MCF 10A (cell line): ENCODE measurements at regions of chr19 and their contacts with region 1.

Region 1: GRCh38 chr19:10870955-10871603 is at the start of gene CARM1:
- DNase-seq: peak; percentile 98
- H3K4me3 Mint-ChIP-seq: peak within 1 kb of the TSS; percentile 75
- H3K27ac Mint-ChIP-seq: peak within 1 kb of the TSS; percentile 75
- H3K4me1 Mint-ChIP-seq: no peaks in the 10 kb centered on the region
- H3K27me3 Mint-ChIP-seq: no peaks in the 10 kb centered on the region
- CTCF ChIP-seq: peak; percentile 52
- total RNA-seq, gene CARM1: 49.5 and 51.7 TPM in 2 replicates

Region 2: DNA sequence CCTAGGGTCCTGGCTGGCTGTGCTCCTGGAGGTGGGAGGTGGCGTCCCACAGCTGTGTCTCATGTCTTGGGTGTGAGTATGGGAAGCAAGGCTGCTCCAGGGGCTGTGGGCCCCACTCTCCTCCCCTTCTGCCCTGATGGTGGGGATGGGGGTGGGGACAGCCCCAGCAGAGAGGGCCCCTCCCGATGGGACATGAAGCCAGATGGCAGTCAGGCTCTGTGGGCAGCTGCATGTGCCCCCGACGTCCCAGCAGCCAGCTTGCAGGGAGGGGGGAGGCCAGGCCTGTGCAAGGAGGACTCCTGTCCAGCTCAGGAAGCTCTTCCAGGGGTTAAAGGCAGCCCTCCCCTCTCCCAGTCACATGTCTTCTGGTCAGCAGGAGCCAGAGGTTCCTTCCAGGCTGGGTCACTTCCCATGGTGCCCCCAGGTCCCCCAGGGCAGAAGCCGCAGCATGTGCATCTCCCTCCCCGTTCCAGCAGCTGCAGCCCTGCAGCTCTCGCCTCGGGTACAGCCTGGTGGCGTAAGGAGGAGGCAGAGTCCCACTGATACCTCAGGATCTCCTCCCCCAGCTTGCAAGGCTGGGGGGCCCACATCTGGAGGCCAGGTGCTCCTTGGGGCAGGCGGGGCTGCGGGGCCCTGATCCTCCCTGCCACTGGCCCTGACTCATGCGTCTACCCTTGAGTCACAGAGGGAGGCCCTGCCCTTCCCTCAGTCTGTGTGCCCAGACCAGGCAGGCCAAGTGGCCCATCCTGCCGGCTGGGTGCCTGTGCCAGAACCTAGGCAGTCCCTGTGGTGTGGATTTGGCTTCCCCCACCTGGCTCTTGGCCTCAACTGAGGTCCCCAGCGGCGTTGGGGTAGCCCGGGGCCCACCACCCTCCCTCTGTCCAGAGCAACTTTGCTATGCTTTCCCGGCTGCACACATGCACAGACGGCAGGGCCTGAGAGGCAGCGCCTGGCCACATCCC is 44.3 kb after region 1 on chr19:
- CTCF ChIA-PET with region 1: interaction called, 11 read pairs
- POLR2A ChIA-PET with region 1: no interaction called
- intact Hi-C with region 1: loop called (anchors 5 kb)
- DNase-seq: peak; percentile 92
- H3K4me3 Mint-ChIP-seq: peak overlapping the region; percentile 25
- H3K27ac Mint-ChIP-seq: peak overlapping the region; percentile 57
- H3K4me1 Mint-ChIP-seq: peaks cover 5% of the 10 kb centered on the region
- H3K27me3 Mint-ChIP-seq: no peaks in the 10 kb centered on the region
- CTCF ChIP-seq: no peak